ENCODE measurements at regions of chr2 and their contacts with region 1.

Region 1: GRCh38 chr2:193824474-193824873 is 1629.7 kb upstream of the TMEFF2 start:
- DNase-seq: no peak
- ATAC-seq: no peak
- H3K4me3 Mint-ChIP-seq: no peak overlapping the region
- H3K27ac Mint-ChIP-seq: no peak overlapping the region
- H3K4me1 Mint-ChIP-seq: no peaks in the 10 kb centered on the region
- H3K27me3 Mint-ChIP-seq: no peaks in the 10 kb centered on the region
- CTCF ChIP-seq: no peak

Region 2: GRCh38 chr2:193837111-193837737 is 12.8 kb after region 1 on chr2:
- CTCF ChIA-PET with region 1: no interaction called
- POLR2A ChIA-PET with region 1: no interaction called
- intact Hi-C with region 1: loop called (anchors 1 kb)
- DNase-seq: no peak
- ATAC-seq: no peak
- H3K4me3 Mint-ChIP-seq: no peak overlapping the region
- H3K27ac Mint-ChIP-seq: no peak overlapping the region
- H3K4me1 Mint-ChIP-seq: no peaks in the 10 kb centered on the region
- H3K27me3 Mint-ChIP-seq: no peaks in the 10 kb centered on the region
- CTCF ChIP-seq: no peak

Measured in activated B cell treated with CpG ODN at 0.5 μM for 24 hours (primary cell).